AG04449 (cell line): ENCODE measurements at regions of chr19 and their contacts with region 1.

Region 1: DNA sequence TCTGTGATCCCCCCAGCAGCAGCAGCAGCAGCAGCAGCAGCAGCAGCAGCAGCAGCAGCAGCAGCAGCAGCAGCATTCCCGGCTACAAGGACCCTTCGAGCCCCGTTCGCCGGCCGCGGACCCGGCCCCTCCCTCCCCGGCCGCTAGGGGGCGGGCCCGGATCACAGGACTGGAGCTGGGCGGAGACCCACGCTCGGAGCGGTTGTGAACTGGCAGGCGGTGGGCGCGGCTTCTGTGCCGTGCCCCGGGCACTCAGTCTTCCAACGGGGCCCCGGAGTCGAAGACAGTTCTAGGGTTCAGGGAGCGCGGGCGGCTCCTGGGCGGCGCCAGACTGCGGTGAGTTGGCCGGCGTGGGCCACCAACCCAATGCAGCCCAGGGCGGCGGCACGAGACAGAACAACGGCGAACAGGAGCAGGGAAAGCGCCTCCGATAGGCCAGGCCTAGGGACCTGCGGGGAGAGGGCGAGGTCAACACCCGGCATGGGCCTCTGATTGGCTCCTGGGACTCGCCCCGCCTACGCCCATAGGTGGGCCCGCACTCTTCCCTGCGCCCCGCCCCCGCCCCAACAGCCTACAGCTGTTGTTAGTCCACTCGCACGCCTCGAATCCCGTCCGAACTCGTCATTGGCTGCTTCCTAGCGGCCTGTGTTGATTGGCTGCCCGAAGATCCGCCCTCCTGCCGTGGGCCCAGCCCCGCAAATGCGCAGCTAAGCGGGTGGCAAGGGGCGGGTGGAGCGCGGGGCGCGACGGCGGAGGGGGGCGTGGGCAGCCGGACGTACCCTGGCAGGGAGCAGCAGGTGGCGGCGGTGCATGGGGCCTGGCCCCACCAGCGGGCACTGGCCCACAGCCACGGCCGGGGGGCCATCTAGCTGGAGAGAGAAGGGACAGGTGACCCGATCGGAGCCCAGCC is 1.4 kb upstream of the SIX5 start:
- DNase-seq: peak; percentile 86
- H3K4me3 ChIP-seq: peak overlapping the region; percentile 58
- CTCF ChIP-seq: peak; percentile 93

Region 2: GRCh38 chr19:45717166-45717982 is 53.1 kb before region 1 on chr19:
- CTCF ChIA-PET with region 1: interaction called, 5 read pairs
- POLR2A ChIA-PET with region 1: interaction called, 54 read pairs
- DNase-seq: peak; percentile 88
- H3K4me3 ChIP-seq: peak overlapping the region; percentile 75
- CTCF ChIP-seq: peak; percentile 9

Region 3: GRCh38 chr19:45753546-45753945 is 16.9 kb before region 1 on chr19:
- CTCF ChIA-PET with region 1: interaction called, 11 read pairs
- POLR2A ChIA-PET with region 1: interaction called, 8 read pairs
- DNase-seq: no peak
- H3K4me3 ChIP-seq: no peak overlapping the region
- CTCF ChIP-seq: no peak

Region 4: DNA sequence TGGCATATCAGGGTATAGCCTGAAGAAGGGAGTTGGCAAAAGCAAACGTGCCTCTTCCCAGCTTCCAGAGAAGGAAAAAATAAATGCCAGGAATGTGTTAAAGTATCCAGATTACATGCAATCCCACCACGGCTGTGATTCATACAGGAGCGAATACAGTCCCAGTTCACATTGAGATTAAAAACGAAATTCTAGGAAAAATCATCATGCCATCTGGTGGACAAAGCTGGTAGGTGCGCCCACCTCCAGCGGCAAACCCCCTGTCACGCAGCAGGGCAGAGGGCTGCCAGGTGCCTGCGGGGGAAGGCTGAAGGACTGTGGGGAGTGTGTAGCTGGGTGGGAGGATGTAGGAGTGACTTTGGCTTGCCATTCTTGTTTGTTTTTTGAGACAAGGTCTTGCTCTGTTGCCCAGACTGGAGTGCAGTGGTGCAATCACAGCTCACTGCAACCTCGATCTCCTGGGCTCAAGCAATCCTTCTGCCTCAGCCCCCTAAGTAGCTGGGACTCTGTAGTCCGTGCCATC is 28.6 kb after region 1 on chr19:
- CTCF ChIA-PET with region 1: interaction called, 170 read pairs
- POLR2A ChIA-PET with region 1: interaction called, 31 read pairs
- DNase-seq: peak; percentile 54
- H3K4me3 ChIP-seq: no peak overlapping the region
- CTCF ChIP-seq: peak; percentile 76

Region 5: GRCh38 chr19:45817010-45817724 is 46.7 kb after region 1 on chr19:
- CTCF ChIA-PET with region 1: interaction called, 46 read pairs
- POLR2A ChIA-PET with region 1: interaction called, 6 read pairs
- DNase-seq: peak; percentile 38
- H3K4me3 ChIP-seq: no peak overlapping the region
- CTCF ChIP-seq: peak; percentile 88